Right ventricle myocardium inferior (tissue), 1 donor: ENCODE measurements at regions of chr2 and their contacts with region 1.

Region 1: DNA sequence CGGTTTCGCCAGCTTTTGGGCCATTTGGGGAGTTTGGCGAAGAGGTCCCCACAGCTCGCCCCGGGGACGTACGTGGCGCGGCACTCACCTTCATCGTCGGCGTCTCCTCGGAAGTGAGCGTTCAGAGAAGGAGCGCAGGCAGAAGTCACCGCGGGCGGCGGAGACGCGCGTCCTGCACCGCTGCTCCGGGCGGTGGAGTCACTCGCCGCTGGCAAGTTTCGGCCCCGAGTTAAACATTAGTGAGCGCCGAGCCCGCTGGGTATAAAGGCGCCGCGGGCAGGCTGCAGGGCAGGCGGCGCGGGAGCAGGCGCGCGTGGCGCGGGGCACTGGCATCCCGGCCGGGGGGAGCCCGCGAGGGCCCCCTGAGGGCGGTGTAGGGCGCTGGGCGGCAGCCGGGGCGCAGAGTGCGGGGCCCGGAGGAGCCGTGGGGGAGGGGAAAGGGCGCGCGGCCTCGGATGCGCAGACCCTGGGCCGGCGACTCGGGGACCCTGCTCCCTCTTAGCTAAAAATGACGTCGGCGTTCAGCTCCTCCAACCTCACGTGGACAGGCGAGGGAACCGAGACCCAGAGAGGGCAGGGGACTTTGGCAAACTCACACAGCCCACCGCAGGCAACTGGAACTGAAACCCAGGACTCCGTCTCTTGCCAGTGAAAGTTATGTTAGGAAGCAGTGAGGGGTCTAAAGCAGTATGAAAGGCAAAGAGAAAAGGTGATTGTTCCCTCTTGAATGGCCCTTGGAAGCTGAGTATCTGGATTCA is at the start of gene DPP4:
- DNase-seq: no peak
- ATAC-seq: peak; percentile 63
- total RNA-seq, gene DPP4: 5.4 TPM

Region 2: GRCh38 chr2:162013514-162014475 is 60.3 kb before region 1 on chr2:
- intact Hi-C with region 1: loop called (anchors 5 kb)
- DNase-seq: no peak
- ATAC-seq: no peak

Region 3: GRCh38 chr2:162037028-162037795 is 36.9 kb before region 1 on chr2:
- intact Hi-C with region 1: loop called (anchors 5 kb)
- DNase-seq: no peak
- ATAC-seq: peak; percentile 31

Region 4: DNA sequence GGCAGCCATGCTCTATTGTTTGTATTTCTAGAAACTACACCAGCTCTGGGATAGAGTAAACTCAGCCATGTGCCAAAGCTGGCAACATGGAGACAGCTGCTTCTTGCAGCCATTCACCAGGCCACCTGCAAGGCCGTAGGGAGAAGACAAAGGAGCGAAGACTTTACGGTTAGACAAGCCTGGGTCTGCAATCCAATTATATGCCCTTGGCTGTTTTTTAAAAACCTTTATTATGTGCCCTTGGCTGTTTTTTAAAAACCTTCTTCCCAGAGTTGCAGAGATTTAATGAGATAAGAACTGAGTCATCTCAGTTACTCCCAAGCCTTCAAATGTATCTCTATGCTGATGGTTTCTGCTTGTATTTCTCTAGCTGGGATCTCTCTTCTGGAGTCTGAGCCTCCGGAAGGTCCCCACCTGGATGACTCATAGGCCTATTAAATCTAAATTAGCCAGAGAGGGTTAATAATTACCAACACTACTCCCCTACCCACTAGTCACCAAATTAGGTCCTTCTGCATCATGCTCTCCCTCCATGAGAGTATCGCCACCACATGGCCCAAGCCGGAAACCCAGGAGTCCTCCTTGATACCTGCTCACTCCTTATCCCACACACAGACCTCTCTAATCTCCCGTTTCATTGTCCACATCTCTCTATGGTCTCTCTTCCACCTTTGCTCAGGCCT is 17.4 kb after region 1 on chr2:
- intact Hi-C with region 1: loop called (anchors 2 kb)
- DNase-seq: no peak
- ATAC-seq: no peak

Region 5: DNA sequence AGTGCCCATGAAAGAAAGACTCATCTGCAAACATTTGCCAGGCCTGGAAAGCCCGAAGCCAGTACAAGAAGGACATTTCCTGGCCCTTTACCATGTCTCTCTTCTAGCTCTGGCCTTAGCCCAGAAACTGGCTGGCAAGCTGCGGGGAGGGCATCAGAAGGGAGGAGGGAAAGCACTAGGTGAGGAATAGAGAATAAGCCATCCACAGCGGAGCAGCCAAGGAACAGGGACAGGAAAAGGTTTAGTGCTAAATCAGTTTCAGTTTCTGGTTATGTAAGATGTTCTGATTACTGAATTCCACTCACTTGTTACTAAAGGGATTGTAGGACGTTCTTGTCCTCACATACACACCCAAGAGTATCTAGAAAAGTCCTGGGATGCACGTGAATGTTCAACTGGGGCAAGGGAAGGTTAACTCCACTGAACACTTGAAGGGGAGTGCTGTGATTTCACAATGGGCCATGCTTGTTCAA is 44.5 kb after region 1 on chr2:
- intact Hi-C with region 1: loop called (anchors 2 kb)
- DNase-seq: no peak
- ATAC-seq: peak; percentile 69